ENCODE measurements at regions of chr2 and their contacts with region 1.

Region 1: DNA sequence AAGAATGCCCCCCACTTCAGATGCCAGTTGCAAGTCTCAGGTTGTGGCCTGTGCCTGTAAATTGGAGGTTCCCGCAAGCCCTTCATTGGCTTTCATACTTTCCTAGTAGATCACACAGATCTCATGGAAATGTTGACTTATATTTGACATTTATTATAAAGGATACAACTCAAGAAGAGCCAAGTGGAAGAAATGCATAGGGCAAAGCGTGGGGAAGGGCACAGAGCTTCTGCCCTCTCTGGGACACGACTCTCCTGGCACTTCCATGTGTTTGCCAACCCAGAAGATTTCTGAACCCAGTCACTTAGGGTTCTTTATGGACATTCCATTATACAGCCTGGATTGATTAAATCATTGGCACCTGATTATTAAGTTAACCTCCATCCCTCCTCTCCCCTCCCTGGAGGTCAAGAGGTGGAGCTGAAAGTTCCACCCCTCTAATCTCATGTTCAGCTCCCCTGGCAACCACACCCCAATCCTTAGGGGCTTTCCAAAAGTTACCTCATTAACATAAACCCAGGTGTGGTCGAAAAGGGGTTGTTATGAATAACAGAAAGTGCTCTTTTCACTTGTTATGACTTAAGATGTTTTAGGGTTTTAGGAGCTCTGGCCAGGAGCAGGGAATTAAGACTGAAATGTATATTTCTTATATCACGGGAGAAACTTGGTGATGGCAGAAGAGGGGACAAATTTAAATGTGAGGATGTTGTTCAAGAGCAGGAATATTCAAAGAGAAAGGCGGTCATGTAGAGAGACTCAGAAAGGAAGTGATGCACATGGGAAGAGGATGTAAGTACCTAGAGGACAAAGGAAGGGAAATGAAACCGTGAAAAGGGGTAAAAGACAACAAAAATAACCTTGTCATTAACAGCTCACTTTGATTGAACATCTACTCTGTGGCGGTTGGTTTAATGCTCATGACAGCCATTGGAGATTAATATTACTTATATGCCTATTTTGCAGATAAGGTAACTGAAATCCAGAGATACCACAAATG is 31.8 kb downstream of the SP100 start:
- DNase-seq: peak; percentile 92
- ATAC-seq: peak; percentile 84
- H3K4me3 ChIP-seq: peak overlapping the region in 3 of 5 experiments; percentile 0 to 39 (median 7)
- H3K4me3 Mint-ChIP-seq: peak overlapping the region; percentile 84
- H3K27ac ChIP-seq: peak overlapping the region; percentile 98 to 99
- H3K27ac Mint-ChIP-seq: peak overlapping the region; percentile 97
- H3K4me1 ChIP-seq: peaks cover 79 to 84% of the 10 kb centered on the region in 2 donors
- H3K4me1 Mint-ChIP-seq: peaks cover 84% of the 10 kb centered on the region
- H3K27me3 ChIP-seq: no peaks in the 10 kb centered on the region
- H3K27me3 Mint-ChIP-seq: no peaks in the 10 kb centered on the region
- CTCF ChIP-seq: no peak

Region 2: DNA sequence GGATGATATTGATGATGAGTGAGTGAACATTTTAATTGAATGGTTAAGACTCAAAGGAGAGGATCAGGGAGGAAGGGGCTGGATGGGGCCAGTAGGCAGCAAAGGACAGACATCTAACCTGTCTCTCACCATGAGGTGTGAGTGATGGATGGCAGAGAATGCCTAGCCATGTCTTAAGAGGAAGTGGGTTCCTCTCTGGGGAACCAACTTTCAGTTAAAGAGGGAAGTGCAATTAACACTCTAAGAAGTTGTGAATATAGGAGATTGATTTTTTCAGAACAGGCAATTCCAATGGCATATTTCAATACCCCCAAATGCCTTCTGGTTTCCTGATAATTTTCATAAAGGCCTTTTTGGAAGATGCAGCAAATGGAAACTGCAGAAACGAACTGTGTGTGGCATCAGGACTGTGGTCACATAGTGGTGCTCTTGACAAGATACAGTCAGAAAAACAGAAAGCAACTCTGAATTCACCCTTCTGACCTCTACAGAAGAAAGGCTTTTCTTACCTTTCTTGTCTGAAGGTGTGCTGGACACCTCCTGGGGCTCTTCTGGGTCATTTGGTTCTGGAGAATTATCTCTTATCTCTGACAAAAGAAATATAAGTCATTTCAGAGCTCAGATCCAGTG is 238.2 kb before region 1 on chr2:
- CTCF ChIA-PET with region 1: no interaction called
- POLR2A ChIA-PET with region 1: no interaction called
- intact Hi-C with region 1: loop called (anchors 2 kb)
- DNase-seq: peak; percentile 80
- ATAC-seq: peak; percentile 69
- H3K4me3 ChIP-seq: peak overlapping the region in 2 of 5 experiments; percentile 6 to 35
- H3K4me3 Mint-ChIP-seq: no peak overlapping the region
- H3K27ac ChIP-seq: peak overlapping the region; percentile 14 to 52
- H3K27ac Mint-ChIP-seq: no peak overlapping the region
- H3K4me1 ChIP-seq: peaks cover 67 to 71% of the 10 kb centered on the region in 2 donors
- H3K4me1 Mint-ChIP-seq: peaks cover 42% of the 10 kb centered on the region
- H3K27me3 ChIP-seq: no peaks in the 10 kb centered on the region
- H3K27me3 Mint-ChIP-seq: no peaks in the 10 kb centered on the region
- CTCF ChIP-seq: no peak

Region 3: GRCh38 chr2:230225486-230225885 is 222.3 kb before region 1 on chr2 and contains the start of gene SP140:
- CTCF ChIA-PET with region 1: no interaction called
- POLR2A ChIA-PET with region 1: interaction called, 5 read pairs
- intact Hi-C with region 1: loop called (anchors 5 kb)
- DNase-seq: peak; percentile 91
- ATAC-seq: peak; percentile 77
- H3K4me3 ChIP-seq: peak within 1 kb of the TSS; percentile 51 to 96 (median 72)
- H3K4me3 Mint-ChIP-seq: peak within 1 kb of the TSS; percentile 88
- H3K27ac ChIP-seq: peak within 1 kb of the TSS; percentile 86 to 87
- H3K27ac Mint-ChIP-seq: peak within 1 kb of the TSS; percentile 96
- H3K4me1 ChIP-seq: peaks cover 58 to 74% of the 10 kb centered on the region in 2 donors
- H3K4me1 Mint-ChIP-seq: peaks cover 76% of the 10 kb centered on the region
- H3K27me3 ChIP-seq: no peaks in the 10 kb centered on the region
- H3K27me3 Mint-ChIP-seq: no peaks in the 10 kb centered on the region
- CTCF ChIP-seq: no peak
- total RNA-seq, gene SP140: 411 and 424 TPM in 2 replicates

Region 4: GRCh38 chr2:230411570-230412370 is 36.0 kb before region 1 on chr2:
- CTCF ChIA-PET with region 1: interaction called, 6 read pairs
- POLR2A ChIA-PET with region 1: interaction called, 8 read pairs
- intact Hi-C with region 1: loop called (anchors 1 kb)
- DNase-seq: peak; percentile 81
- ATAC-seq: peak; percentile 62
- H3K4me3 ChIP-seq: peak overlapping the region; percentile 69 to 92 (median 88)
- H3K4me3 Mint-ChIP-seq: peak overlapping the region; percentile 98
- H3K27ac ChIP-seq: peak overlapping the region; percentile 88 to 92
- H3K27ac Mint-ChIP-seq: peak overlapping the region; percentile 99
- H3K4me1 ChIP-seq: peaks cover 54 to 63% of the 10 kb centered on the region in 2 donors
- H3K4me1 Mint-ChIP-seq: peaks cover 72% of the 10 kb centered on the region
- H3K27me3 ChIP-seq: no peaks in the 10 kb centered on the region
- H3K27me3 Mint-ChIP-seq: no peaks in the 10 kb centered on the region
- CTCF ChIP-seq: no peak

Region 5: DNA sequence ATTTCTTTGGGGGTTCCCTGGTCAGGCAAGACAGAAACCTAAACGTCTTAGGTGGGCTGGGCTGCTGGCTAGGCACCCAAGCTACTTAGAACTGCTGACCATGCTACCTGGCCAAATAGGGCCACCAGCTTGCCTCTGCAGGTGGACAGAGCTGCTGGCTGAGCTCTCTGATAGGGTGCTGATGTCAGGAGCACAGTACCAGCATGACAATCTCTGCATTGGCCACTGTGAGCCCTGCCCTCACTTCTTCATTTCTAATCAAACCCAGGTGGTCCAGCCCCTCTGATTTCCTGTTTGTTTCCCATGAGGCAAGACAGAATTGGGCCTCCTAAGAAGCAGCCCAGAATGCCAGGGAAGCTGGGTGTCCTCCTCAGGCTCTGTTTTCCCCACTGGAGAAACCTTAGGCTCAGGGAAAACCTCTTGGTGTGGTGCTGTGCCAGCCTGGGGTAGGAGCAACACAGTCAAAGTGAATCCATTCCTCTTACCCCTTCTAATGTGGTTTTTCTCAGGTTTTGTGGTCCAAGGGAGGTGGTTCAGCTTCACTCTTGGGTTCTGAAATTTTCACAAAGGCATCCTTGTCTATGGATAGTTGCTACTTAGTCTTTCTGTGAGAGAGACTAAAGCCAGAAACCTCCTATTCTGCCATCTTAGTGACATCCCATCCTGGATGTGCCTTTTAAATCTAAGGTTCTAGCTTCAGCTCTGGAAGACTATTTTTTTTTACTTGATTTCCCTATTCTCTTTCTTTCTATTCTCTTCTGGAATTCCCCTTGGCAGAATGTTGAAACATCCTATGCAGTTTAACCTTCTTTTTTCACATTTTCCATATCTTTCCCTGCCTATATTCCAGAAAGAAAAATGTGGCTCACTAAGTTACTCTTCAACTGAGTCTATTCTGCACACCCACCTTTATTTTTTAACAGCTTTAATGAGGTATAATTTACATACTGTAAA is 16.5 kb before region 1 on chr2:
- CTCF ChIA-PET with region 1: interaction called, 4 read pairs
- POLR2A ChIA-PET with region 1: interaction called, 4 read pairs
- intact Hi-C with region 1: loop called (anchors 2 kb)
- DNase-seq: no peak
- ATAC-seq: peak; percentile 65
- H3K4me3 ChIP-seq: peak overlapping the region in 1 of 5 experiments; percentile 27
- H3K4me3 Mint-ChIP-seq: peak overlapping the region; percentile 59
- H3K27ac ChIP-seq: peak overlapping the region; percentile 54 to 87
- H3K27ac Mint-ChIP-seq: peak overlapping the region; percentile 86
- H3K4me1 ChIP-seq: peaks cover 26 to 56% of the 10 kb centered on the region in 2 donors
- H3K4me1 Mint-ChIP-seq: peaks cover 62% of the 10 kb centered on the region
- H3K27me3 ChIP-seq: no peaks in the 10 kb centered on the region
- H3K27me3 Mint-ChIP-seq: no peaks in the 10 kb centered on the region
- CTCF ChIP-seq: no peak

Region 6: DNA sequence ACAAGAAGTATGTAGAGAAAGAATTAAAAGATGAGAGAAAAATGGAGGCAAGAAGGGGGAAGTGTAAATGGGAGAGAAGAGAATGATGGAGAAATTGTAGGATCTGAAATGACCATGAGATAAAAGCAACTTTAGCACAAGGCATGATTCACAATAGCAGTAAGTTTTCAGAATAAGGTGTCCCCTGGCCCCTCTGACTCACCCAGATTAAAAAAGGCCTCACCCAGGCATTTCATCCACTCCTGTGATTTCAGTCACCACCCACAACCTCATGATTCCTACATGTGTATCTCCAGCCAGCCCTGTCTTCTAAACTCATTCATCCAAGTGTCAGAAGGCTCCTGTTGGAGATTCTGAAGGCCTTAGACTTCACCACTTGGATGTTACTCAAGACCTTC is 24.9 kb after region 1 on chr2:
- CTCF ChIA-PET with region 1: interaction called, 4 read pairs
- POLR2A ChIA-PET with region 1: interaction called, 7 read pairs
- intact Hi-C with region 1: loop called (anchors 2 kb)
- DNase-seq: no peak
- ATAC-seq: peak; percentile 50
- H3K4me3 ChIP-seq: no peak overlapping the region
- H3K4me3 Mint-ChIP-seq: peak overlapping the region; percentile 24
- H3K27ac ChIP-seq: peak overlapping the region; percentile 46 to 81
- H3K27ac Mint-ChIP-seq: peak overlapping the region; percentile 86
- H3K4me1 ChIP-seq: peaks cover 46 to 50% of the 10 kb centered on the region in 2 donors
- H3K4me1 Mint-ChIP-seq: peaks cover 50% of the 10 kb centered on the region
- H3K27me3 ChIP-seq: no peaks in the 10 kb centered on the region
- H3K27me3 Mint-ChIP-seq: no peaks in the 10 kb centered on the region
- CTCF ChIP-seq: no peak

Region 7: GRCh38 chr2:230602562-230603230 is 154.9 kb after region 1 on chr2:
- CTCF ChIA-PET with region 1: interaction called, 3 read pairs
- POLR2A ChIA-PET with region 1: interaction called, 19 read pairs
- intact Hi-C with region 1: loop called (anchors 2 kb)
- DNase-seq: peak; percentile 83
- ATAC-seq: peak; percentile 84
- H3K4me3 ChIP-seq: peak overlapping the region in 3 of 5 experiments; percentile 9 to 31 (median 19)
- H3K4me3 Mint-ChIP-seq: peak overlapping the region; percentile 78
- H3K27ac ChIP-seq: peak overlapping the region; percentile 99
- H3K27ac Mint-ChIP-seq: peak overlapping the region; percentile 99
- H3K4me1 ChIP-seq: peaks cover 72% of the 10 kb centered on the region in 2 donors
- H3K4me1 Mint-ChIP-seq: peaks cover 83% of the 10 kb centered on the region
- H3K27me3 ChIP-seq: no peaks in the 10 kb centered on the region
- H3K27me3 Mint-ChIP-seq: no peaks in the 10 kb centered on the region
- CTCF ChIP-seq: no peak